ENCODE measurements at regions of chr3 and their contacts with region 1.

Region 1: GRCh38 chr3:127555108-127555507 is 35.4 kb downstream of the TPRA1 start:
- DNase-seq: no peak
- H3K27ac ChIP-seq: no peak overlapping the region
- CTCF ChIP-seq: no peak

Region 2: GRCh38 chr3:127565711-127566110 is 10.6 kb after region 1 on chr3:
- CTCF ChIA-PET with region 1: interaction called, 11 read pairs
- POLR2A ChIA-PET with region 1: no interaction called
- DNase-seq: no peak
- H3K27ac ChIP-seq: no peak overlapping the region
- CTCF ChIP-seq: no peak